MCF 10A (cell line): ENCODE measurements at regions of chr10 and their contacts with region 1.

Region 1: GRCh38 chr10:119416855-119417254 is 125.7 kb downstream of the RGS10 start:
- DNase-seq: peak; percentile 75
- H3K4me3 Mint-ChIP-seq: no peak overlapping the region
- H3K27ac Mint-ChIP-seq: no peak overlapping the region
- H3K4me1 Mint-ChIP-seq: no peaks in the 10 kb centered on the region
- H3K27me3 Mint-ChIP-seq: no peaks in the 10 kb centered on the region
- CTCF ChIP-seq: peak; percentile 76

Region 2: GRCh38 chr10:119290291-119291048 is 126.4 kb before region 1 on chr10:
- CTCF ChIA-PET with region 1: interaction called, 3 read pairs
- POLR2A ChIA-PET with region 1: no interaction called
- intact Hi-C with region 1: loop called (anchors 2 kb)
- DNase-seq: no peak
- H3K4me3 Mint-ChIP-seq: no peak overlapping the region
- H3K27ac Mint-ChIP-seq: no peak overlapping the region
- H3K4me1 Mint-ChIP-seq: peaks cover 8% of the 10 kb centered on the region
- H3K27me3 Mint-ChIP-seq: peaks cover 25% of the 10 kb centered on the region
- CTCF ChIP-seq: no peak

Region 3: DNA sequence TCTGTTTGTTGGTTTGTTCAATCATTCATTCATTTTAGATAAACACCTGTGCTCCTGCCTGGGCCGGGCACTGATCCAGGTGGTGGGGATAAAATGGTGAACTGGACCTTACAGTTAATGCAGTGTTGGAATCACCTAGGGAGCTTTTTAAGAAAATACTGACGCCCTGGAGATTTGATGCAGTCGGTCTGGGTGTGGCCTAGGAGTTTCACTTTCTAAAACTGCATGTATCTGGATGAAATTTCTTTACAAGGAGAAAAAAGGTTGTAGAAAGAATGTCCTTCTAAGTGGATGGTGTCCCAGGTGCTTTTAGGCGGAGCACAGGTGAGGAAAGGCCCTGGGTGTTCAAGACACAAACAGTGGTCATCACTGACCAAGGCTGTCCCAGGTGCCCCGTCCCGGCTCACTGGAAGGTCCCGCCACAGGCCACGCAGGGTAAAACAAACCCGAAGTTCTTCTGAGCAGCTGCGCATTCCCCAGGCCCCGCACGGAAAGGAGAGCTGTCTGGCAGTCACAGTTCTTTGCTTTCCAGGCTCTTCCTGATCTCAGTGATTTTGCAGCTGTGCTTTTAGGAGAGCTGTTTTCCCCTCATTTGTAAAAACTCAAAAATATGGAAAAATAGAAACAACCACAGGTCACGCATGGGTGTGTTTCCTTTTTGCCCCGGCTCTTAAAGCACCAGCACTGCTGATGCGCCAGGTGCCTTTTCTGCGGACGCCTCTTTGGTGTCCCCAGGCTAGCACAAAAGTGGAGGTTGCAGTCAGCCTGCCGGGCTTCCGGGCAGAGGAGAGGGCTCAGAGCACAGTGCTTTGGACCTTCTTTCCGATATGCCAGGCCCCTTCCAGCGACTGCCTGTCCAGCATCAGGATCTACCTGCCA is 47.6 kb before region 1 on chr10:
- CTCF ChIA-PET with region 1: no interaction called
- POLR2A ChIA-PET with region 1: no interaction called
- intact Hi-C with region 1: no loop called
- DNase-seq: no peak
- H3K4me3 Mint-ChIP-seq: no peak overlapping the region
- H3K27ac Mint-ChIP-seq: no peak overlapping the region
- H3K4me1 Mint-ChIP-seq: peaks cover 10% of the 10 kb centered on the region
- H3K27me3 Mint-ChIP-seq: no peaks in the 10 kb centered on the region
- CTCF ChIP-seq: no peak